PC-3 (cell line): ENCODE measurements at regions of chr2 and their contacts with region 1.

Region 1: GRCh38 chr2:155310589-155310988 is 612.1 kb downstream of the KCNJ3 start:
- DNase-seq: peak; percentile 50
- ATAC-seq: peak; percentile 42
- H3K4me3 ChIP-seq: no peak overlapping the region
- H3K27ac ChIP-seq: no peak overlapping the region
- H3K4me1 ChIP-seq: no peaks in the 10 kb centered on the region
- H3K27me3 ChIP-seq: no peaks in the 10 kb centered on the region
- CTCF ChIP-seq: peak; percentile 75

Region 2: GRCh38 chr2:154402218-154402617 is 908.4 kb before region 1 on chr2:
- CTCF ChIA-PET with region 1: interaction called, 3 read pairs
- POLR2A ChIA-PET with region 1: no interaction called
- intact Hi-C with region 1: loop called (anchors 1 kb)
- DNase-seq: peak; percentile 41
- ATAC-seq: peak; percentile 66; the same call in 1 of the 2 replicates
- H3K4me3 ChIP-seq: no peak overlapping the region
- H3K27ac ChIP-seq: no peak overlapping the region
- H3K4me1 ChIP-seq: no peaks in the 10 kb centered on the region
- H3K27me3 ChIP-seq: no peaks in the 10 kb centered on the region
- CTCF ChIP-seq: peak; percentile 59

Region 3: DNA sequence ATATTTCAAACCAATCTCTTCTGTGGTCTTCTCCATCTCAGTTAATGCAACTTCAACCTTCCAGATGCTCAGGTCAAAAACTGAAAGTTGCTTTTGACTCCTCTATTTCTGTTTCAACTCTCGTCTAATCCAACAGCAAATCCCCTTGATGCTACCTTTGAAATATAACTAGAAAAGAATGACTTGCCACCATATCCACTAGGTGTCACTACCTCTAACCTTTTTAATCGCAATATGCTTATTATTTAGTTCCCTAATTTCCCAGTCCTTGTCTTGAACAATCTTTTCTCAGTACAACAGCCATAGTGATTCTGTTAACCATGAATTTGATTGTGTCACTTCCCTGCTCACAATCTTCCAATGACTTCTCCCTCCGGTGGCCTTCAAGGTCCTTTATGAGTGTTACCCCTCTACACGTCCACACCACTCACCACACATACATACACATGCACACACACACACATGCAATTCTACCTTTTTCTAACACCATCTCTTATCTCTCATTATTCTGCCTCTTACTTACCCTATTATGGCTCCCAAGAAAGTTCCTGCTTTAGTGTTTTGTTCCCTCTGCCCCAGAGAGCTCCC is 857.6 kb before region 1 on chr2:
- CTCF ChIA-PET with region 1: no interaction called
- POLR2A ChIA-PET with region 1: no interaction called
- intact Hi-C with region 1: loop called (anchors 2 kb)
- DNase-seq: peak; percentile 42
- ATAC-seq: no peak
- H3K4me3 ChIP-seq: no peak overlapping the region
- H3K27ac ChIP-seq: no peak overlapping the region
- H3K4me1 ChIP-seq: no peaks in the 10 kb centered on the region
- H3K27me3 ChIP-seq: no peaks in the 10 kb centered on the region
- CTCF ChIP-seq: peak; percentile 67

Region 4: GRCh38 chr2:154623819-154624218 is 686.8 kb before region 1 on chr2:
- CTCF ChIA-PET with region 1: no interaction called
- POLR2A ChIA-PET with region 1: no interaction called
- intact Hi-C with region 1: loop called (anchors 1 kb)
- DNase-seq: peak; percentile 49
- ATAC-seq: peak; percentile 85
- H3K4me3 ChIP-seq: no peak overlapping the region
- H3K27ac ChIP-seq: no peak overlapping the region
- H3K4me1 ChIP-seq: no peaks in the 10 kb centered on the region
- H3K27me3 ChIP-seq: no peaks in the 10 kb centered on the region
- CTCF ChIP-seq: peak; percentile 77